ENCODE measurements at regions of chr19 and their contacts with region 1.

Region 1: DNA sequence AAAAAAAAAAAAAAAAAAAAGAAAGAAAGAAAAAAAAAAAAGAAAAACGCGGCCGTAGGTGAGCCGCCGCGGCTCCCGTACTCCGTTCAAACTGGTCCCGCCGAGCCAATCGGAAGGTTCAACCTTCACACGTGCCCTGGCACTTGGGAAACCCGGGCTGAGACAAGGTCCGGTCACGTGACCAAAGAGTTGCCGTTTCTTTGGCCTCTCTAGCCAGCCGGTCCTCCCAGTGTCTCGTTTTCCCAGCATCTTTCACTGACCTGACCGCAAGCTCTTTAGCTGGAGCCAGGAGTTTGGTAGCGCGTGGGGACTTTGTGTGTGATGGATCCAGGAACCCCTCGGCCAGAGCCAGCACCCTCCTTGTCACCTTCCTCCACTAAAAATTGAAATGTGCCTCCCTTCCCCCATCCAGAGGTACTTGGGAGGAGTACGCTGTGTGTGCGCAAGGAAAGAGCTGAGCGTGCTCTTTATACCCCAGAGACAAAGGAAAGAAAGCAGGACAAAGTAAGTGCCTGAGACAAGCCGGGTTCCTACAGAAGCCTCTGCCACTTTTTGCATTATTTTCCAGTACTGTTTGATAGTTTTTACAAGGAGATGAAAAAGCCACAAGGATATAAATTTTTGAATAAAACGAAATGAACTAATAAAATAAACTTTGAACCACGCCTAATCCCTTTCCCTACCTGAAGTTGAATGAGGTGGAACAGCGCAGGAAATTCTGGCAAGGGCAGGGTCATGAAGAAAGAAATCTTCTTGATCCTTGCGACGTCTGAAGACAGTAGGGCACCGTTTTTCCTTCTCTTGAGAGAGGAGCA is 959 bp downstream of the TNPO2 start:
- DNase-seq: peak; percentile 99
- ATAC-seq: peak; percentile 73
- H3K4me3 ChIP-seq: peak overlapping the region; percentile 91
- H3K27ac ChIP-seq: peak overlapping the region; percentile 85
- H3K4me1 ChIP-seq: peaks cover 4% of the 10 kb centered on the region
- H3K27me3 ChIP-seq: no peaks in the 10 kb centered on the region
- CTCF ChIP-seq: no peak
- POLR2A ChIP-seq: peak; percentile 56; the same call in 1 of the 2 replicates
- RAD21 ChIP-seq: no peak

Region 2: DNA sequence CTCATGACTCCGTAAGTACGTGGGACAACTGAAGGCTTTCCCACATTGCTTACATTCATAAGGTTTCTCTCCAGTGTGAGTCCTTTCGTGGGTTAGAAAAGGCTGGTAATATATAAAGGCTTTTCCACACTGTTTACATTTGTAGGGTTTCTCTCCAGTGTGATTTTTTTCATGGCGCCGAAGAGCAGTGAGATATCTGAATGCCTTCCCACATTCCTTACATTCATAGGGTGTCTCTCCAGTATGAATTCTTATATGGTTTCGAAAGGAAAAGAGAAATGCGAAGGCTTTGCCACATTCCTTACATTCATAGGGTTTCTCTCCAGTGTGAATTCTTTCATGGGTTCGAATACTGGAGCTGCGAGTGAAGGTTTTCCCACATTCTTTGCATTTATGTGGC is 141.7 kb before region 1 on chr19:
- CTCF ChIA-PET with region 1: no interaction called
- POLR2A ChIA-PET with region 1: no interaction called
- dilution Hi-C with region 1: no loop called
- in situ Hi-C with region 1: no loop called
- intact Hi-C with region 1: no loop called
- DNase-seq: no peak
- ATAC-seq: no peak
- H3K4me3 ChIP-seq: no peak overlapping the region
- H3K27ac ChIP-seq: no peak overlapping the region
- H3K4me1 ChIP-seq: no peaks in the 10 kb centered on the region; the same call in 1 of the 2 replicates
- H3K27me3 ChIP-seq: no peaks in the 10 kb centered on the region
- CTCF ChIP-seq: no peak
- POLR2A ChIP-seq: no peak
- RAD21 ChIP-seq: no peak

Region 3: GRCh38 chr19:12696366-12697335 is 26.1 kb before region 1 on chr19 and contains the start of gene FBXW9:
- CTCF ChIA-PET with region 1: no interaction called
- POLR2A ChIA-PET with region 1: interaction called, 16 read pairs
- dilution Hi-C with region 1: no loop called
- in situ Hi-C with region 1: no loop called
- intact Hi-C with region 1: no loop called
- DNase-seq: peak; percentile 95
- ATAC-seq: peak; percentile 86
- H3K4me3 ChIP-seq: peak within 1 kb of the TSS; percentile 80
- H3K27ac ChIP-seq: peak within 1 kb of the TSS; percentile 63
- H3K4me1 ChIP-seq: peaks cover 2% of the 10 kb centered on the region; the same call in 1 of the 2 replicates
- H3K27me3 ChIP-seq: no peaks in the 10 kb centered on the region
- CTCF ChIP-seq: no peak
- POLR2A ChIP-seq: peak; percentile 43; the same call in 1 of the 2 replicates
- RAD21 ChIP-seq: no peak
- total RNA-seq, gene FBXW9: 8.6 and 9.5 TPM in 2 replicates

Region 4: GRCh38 chr19:12733369-12734176 is 10.8 kb after region 1 on chr19:
- CTCF ChIA-PET with region 1: interaction called, 8 read pairs
- POLR2A ChIA-PET with region 1: interaction called, 8 read pairs
- dilution Hi-C with region 1: no loop called
- in situ Hi-C with region 1: no loop called
- intact Hi-C with region 1: loop called (anchors 1 kb)
- DNase-seq: peak; percentile 45
- ATAC-seq: no peak
- H3K4me3 ChIP-seq: peak overlapping the region; percentile 95
- H3K27ac ChIP-seq: peak overlapping the region; percentile 98
- H3K4me1 ChIP-seq: peaks cover 10% of the 10 kb centered on the region
- H3K27me3 ChIP-seq: no peaks in the 10 kb centered on the region
- CTCF ChIP-seq: peak; percentile 49
- POLR2A ChIP-seq: no peak; the same call in 1 of the 2 replicates
- RAD21 ChIP-seq: no peak

Region 5: GRCh38 chr19:12796146-12797071 is 73.6 kb after region 1 on chr19:
- CTCF ChIA-PET with region 1: no interaction called
- POLR2A ChIA-PET with region 1: no interaction called
- dilution Hi-C with region 1: no loop called
- in situ Hi-C with region 1: no loop called
- intact Hi-C with region 1: loop called (anchors 1 kb)
- DNase-seq: peak; percentile 81
- ATAC-seq: peak; percentile 38
- H3K4me3 ChIP-seq: no peak overlapping the region
- H3K27ac ChIP-seq: no peak overlapping the region
- H3K4me1 ChIP-seq: peaks cover 6% of the 10 kb centered on the region
- H3K27me3 ChIP-seq: no peaks in the 10 kb centered on the region
- CTCF ChIP-seq: peak; percentile 98; the same call in 1 of the 2 replicates
- POLR2A ChIP-seq: peak; percentile 76; the same call in 1 of the 2 replicates
- RAD21 ChIP-seq: peak; percentile 99